ENCODE measurements at regions of chr2 and their contacts with region 1.

Region 1: GRCh38 chr2:72198532-72199241 is 51.0 kb upstream of the CYP26B1 start:
- DNase-seq: peak; percentile 30
- ATAC-seq: peak; percentile 71
- H3K4me3 ChIP-seq: no peak overlapping the region
- H3K27ac ChIP-seq: no peak overlapping the region
- H3K4me1 ChIP-seq: no peaks in the 10 kb centered on the region
- H3K27me3 ChIP-seq: no peaks in the 10 kb centered on the region
- CTCF ChIP-seq: peak; percentile 53

Region 2: GRCh38 chr2:72173640-72174321 is 24.9 kb before region 1 on chr2:
- CTCF ChIA-PET with region 1: no interaction called
- POLR2A ChIA-PET with region 1: no interaction called
- intact Hi-C with region 1: no loop called
- DNase-seq: no peak
- ATAC-seq: no peak
- H3K4me3 ChIP-seq: no peak overlapping the region
- H3K27ac ChIP-seq: no peak overlapping the region
- H3K4me1 ChIP-seq: no peaks in the 10 kb centered on the region
- H3K27me3 ChIP-seq: no peaks in the 10 kb centered on the region
- CTCF ChIP-seq: no peak

Region 3: GRCh38 chr2:72579591-72580180 is 381.0 kb after region 1 on chr2:
- CTCF ChIA-PET with region 1: no interaction called
- POLR2A ChIA-PET with region 1: no interaction called
- intact Hi-C with region 1: loop called (anchors 1 kb)
- DNase-seq: peak; percentile 68
- ATAC-seq: peak; percentile 31; the same call in 1 of the 2 replicates
- H3K4me3 ChIP-seq: no peak overlapping the region
- H3K27ac ChIP-seq: no peak overlapping the region
- H3K4me1 ChIP-seq: no peaks in the 10 kb centered on the region
- H3K27me3 ChIP-seq: no peaks in the 10 kb centered on the region
- CTCF ChIP-seq: peak; percentile 84